SK-N-SH (cell line): ENCODE measurements at regions of chr1 and their contacts with region 1.

Region 1: GRCh38 chr1:48697066-48697707 is 79.5 kb downstream of the BEND5 start:
- DNase-seq: peak; percentile 68
- H3K4me3 ChIP-seq: no peak overlapping the region
- H3K27ac ChIP-seq: no peak overlapping the region
- H3K4me1 ChIP-seq: no peaks in the 10 kb centered on the region; a peak in 1 of 4 replicates
- H3K27me3 ChIP-seq: peaks cover 1% of the 10 kb centered on the region; the same call in 1 of the 2 replicates
- CTCF ChIP-seq: peak; percentile 94
- EP300 ChIP-seq: no peak
- RAD21 ChIP-seq: peak; percentile 76

Region 2: GRCh38 chr1:48581270-48581669 is 115.9 kb before region 1 on chr1:
- CTCF ChIA-PET with region 1: interaction called, 33 read pairs
- POLR2A ChIA-PET with region 1: no interaction called
- DNase-seq: peak; percentile 32
- H3K4me3 ChIP-seq: no peak overlapping the region
- H3K27ac ChIP-seq: peak overlapping the region in 1 of 2 experiments; percentile 60; a peak in 1 of 4 replicates
- H3K4me1 ChIP-seq: peaks cover 0 to 9% of the 10 kb centered on the region in 2 experiments; a peak in 2 of 4 replicates
- H3K27me3 ChIP-seq: no peaks in the 10 kb centered on the region
- CTCF ChIP-seq: no peak
- EP300 ChIP-seq: no peak
- RAD21 ChIP-seq: no peak

Region 3: GRCh38 chr1:48610628-48611542 is 86.3 kb before region 1 on chr1:
- CTCF ChIA-PET with region 1: interaction called, 14 read pairs
- POLR2A ChIA-PET with region 1: no interaction called
- DNase-seq: peak; percentile 34
- H3K4me3 ChIP-seq: no peak overlapping the region
- H3K27ac ChIP-seq: peak overlapping the region in 1 of 2 experiments; percentile 55; a peak in 1 of 4 replicates
- H3K4me1 ChIP-seq: peaks cover 0 to 18% of the 10 kb centered on the region in 2 experiments; a peak in 2 of 4 replicates
- H3K27me3 ChIP-seq: no peaks in the 10 kb centered on the region
- CTCF ChIP-seq: no peak
- EP300 ChIP-seq: no peak
- RAD21 ChIP-seq: no peak

Region 4: DNA sequence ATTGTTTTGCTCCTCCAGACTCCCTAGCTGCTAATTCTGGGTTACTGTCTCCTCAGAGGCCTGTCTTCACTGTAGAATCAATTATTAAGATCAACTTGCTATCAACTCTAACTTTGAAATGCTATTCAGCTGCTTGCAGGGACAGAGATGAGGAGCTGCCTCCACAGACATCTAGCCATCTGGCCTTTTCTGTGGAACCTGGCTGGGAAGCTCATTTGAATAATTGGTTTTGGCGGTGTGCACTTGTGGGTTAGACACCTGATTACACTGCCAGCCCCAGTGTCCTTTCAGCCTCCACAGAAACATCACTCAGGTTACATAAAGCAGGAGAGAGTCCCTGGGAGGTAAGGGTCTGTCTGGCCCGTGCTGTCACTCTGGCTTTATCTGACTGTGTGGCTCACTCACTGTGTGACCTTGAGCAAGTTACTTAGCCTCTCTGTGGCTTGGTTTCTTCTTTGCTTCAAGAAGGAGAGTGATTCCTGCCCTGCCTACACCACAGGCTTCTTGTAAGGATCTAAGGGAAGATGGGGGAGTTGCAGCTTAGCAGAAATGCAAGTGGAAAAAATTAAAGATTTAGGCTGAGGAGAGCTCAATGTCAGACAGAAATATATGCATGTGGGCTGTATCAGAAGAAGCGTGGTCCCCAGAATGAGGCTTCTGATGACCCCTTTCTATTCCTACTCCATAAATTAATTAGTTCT is 52.1 kb before region 1 on chr1:
- CTCF ChIA-PET with region 1: no interaction called
- POLR2A ChIA-PET with region 1: no interaction called
- DNase-seq: no peak
- H3K4me3 ChIP-seq: no peak overlapping the region
- H3K27ac ChIP-seq: no peak overlapping the region
- H3K4me1 ChIP-seq: peaks cover 0 to 7% of the 10 kb centered on the region in 2 experiments; a peak in 1 of 4 replicates
- H3K27me3 ChIP-seq: no peaks in the 10 kb centered on the region
- CTCF ChIP-seq: no peak
- EP300 ChIP-seq: no peak
- RAD21 ChIP-seq: no peak

Region 5: GRCh38 chr1:48710318-48710717 is 13.1 kb after region 1 on chr1:
- CTCF ChIA-PET with region 1: interaction called, 27 read pairs
- POLR2A ChIA-PET with region 1: interaction called, 3 read pairs
- DNase-seq: no peak
- H3K4me3 ChIP-seq: no peak overlapping the region
- H3K27ac ChIP-seq: no peak overlapping the region
- H3K4me1 ChIP-seq: peaks cover 0 to 23% of the 10 kb centered on the region in 2 experiments; a peak in 2 of 4 replicates
- H3K27me3 ChIP-seq: no peaks in the 10 kb centered on the region
- CTCF ChIP-seq: no peak
- EP300 ChIP-seq: no peak
- RAD21 ChIP-seq: no peak

Region 6: GRCh38 chr1:48817505-48818114 is 120.4 kb after region 1 on chr1:
- CTCF ChIA-PET with region 1: interaction called, 10 read pairs
- POLR2A ChIA-PET with region 1: no interaction called
- DNase-seq: peak; percentile 51
- H3K4me3 ChIP-seq: no peak overlapping the region; a peak in 1 of 4 replicates
- H3K27ac ChIP-seq: no peak overlapping the region
- H3K4me1 ChIP-seq: peaks cover 0 to 2% of the 10 kb centered on the region in 2 experiments; a peak in 2 of 4 replicates
- H3K27me3 ChIP-seq: no peaks in the 10 kb centered on the region
- CTCF ChIP-seq: peak; percentile 78
- EP300 ChIP-seq: no peak
- RAD21 ChIP-seq: peak; percentile 91